ENCODE measurements at regions of chr9 and their contacts with region 1.

Region 1: GRCh38 chr9:36632892-36633291 is 60.2 kb downstream of the MELK start:
- DNase-seq: peak; percentile 28
- ATAC-seq: no peak; the same call in 1 of the 2 replicates
- H3K4me3 ChIP-seq: no peak overlapping the region
- H3K27ac ChIP-seq: no peak overlapping the region
- H3K4me1 ChIP-seq: no peaks in the 10 kb centered on the region
- H3K27me3 ChIP-seq: no peaks in the 10 kb centered on the region
- CTCF ChIP-seq: peak; percentile 69

Region 2: DNA sequence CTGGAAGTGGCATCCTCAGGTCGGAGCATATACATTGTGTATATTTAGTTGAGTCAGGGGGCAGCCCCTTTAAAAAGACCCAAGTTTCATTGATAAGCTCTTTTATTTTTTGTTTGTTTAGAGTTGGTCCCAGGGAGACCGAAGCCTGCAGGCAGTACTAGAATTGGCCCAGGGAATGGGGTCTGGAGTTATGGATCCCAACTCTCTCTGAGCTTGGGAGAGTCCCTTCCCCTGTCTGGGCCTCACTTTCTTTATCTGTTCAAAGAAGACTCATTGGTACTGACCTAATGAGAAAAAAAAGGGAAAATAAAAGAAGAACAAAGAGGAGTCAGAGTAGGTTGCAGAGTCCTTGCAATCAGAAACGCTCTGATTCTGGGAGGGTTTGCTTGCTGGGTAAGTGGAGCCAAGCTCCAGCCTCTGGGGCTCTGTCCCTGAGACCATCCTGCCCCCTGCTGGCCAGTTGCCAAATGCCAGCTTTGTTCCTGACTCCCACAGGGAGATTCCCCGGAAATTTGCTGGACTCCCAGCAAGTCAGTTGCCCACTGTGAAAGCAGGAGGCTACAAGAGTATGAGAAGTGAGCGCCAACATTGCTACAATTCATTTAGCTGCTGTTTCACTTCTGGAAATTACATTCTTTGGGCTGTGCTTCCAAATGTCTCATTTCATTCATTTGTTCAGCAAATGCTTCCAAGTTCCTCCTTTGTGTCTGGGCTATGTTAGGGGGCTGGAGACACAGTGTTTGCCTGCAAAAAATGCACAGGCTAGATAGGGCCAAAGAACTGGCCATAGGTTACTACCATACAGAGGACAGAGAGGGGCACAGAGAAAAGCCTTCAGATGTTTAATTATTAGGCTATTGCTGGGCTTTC is 96.0 kb after region 1 on chr9:
- CTCF ChIA-PET with region 1: interaction called, 10 read pairs
- POLR2A ChIA-PET with region 1: no interaction called
- intact Hi-C with region 1: loop called (anchors 2 kb)
- DNase-seq: peak; percentile 72
- ATAC-seq: peak; percentile 62
- H3K4me3 ChIP-seq: no peak overlapping the region
- H3K27ac ChIP-seq: no peak overlapping the region
- H3K4me1 ChIP-seq: no peaks in the 10 kb centered on the region
- H3K27me3 ChIP-seq: no peaks in the 10 kb centered on the region
- CTCF ChIP-seq: peak; percentile 76

Region 3: DNA sequence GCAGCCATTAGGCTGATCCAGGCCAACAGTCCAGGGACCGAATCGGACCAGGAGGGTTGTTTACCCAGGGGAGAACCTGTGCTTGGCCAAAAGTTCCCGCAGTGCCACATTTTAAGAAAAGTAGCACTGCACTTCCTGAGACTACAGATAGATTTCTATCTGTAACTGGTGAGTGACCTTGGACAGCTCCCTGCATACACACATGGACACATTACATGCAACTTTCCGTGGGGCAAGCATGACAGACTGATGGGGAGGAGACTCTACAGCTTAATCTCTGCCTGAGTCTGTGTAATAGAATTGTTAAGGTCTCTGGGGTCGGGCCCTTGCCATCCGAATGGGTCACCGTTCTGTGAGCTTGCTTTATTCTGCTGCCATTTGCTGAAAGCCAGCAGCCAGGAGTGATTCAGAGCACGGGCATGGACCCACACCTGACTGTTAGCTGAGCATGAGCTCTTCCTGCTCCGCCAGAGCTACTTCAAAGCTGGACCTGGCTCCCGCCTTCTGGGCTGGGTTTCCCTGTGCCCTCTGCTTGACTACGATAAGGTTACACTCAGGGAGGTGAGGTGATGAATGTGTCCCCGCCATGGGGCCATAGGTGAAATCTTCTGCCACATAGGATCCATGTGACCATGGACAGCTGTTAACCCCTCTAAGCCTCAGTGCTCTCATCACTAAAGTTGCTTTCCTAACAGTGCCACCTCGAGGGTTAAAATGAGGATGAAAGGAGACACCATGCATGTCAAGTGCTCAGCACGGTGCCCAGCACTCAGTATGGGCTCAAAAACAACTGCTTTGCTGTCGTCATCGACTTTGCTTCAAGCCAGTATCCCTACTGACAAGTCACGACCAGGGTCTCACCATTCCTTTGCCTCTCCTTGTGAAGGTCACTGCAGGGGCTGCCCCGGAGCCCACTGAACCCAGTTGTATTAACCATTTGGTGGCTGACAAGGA is 139.8 kb after region 1 on chr9:
- CTCF ChIA-PET with region 1: no interaction called
- POLR2A ChIA-PET with region 1: no interaction called
- intact Hi-C with region 1: no loop called
- DNase-seq: peak; percentile 29
- ATAC-seq: peak; percentile 31; the same call in 1 of the 2 replicates
- H3K4me3 ChIP-seq: no peak overlapping the region
- H3K27ac ChIP-seq: no peak overlapping the region
- H3K4me1 ChIP-seq: no peaks in the 10 kb centered on the region
- H3K27me3 ChIP-seq: peaks cover 53% of the 10 kb centered on the region
- CTCF ChIP-seq: no peak

Measured in PC-3 (cell line).